Vagina (tissue), 2 donors: ENCODE measurements at regions of chr4 and their contacts with region 1.

Region 1: GRCh38 chr4:6783053-6783981 is 790 bp downstream of the KIAA0232 start:
- DNase-seq: peak in 1 of 2 donors; percentile 94
- H3K4me3 ChIP-seq: peak overlapping the region; percentile 96 to 100
- H3K27ac ChIP-seq: peak overlapping the region; percentile 100
- H3K4me1 ChIP-seq: peaks cover 52% of the 10 kb centered on the region
- H3K27me3 ChIP-seq: no peaks in the 10 kb centered on the region
- CTCF ChIP-seq: no peak
- POLR2A ChIP-seq: peak in 1 of 2 donors; percentile 76

Region 2: GRCh38 chr4:6768539-6768905 is 14.8 kb before region 1 on chr4:
- intact Hi-C with region 1: no loop called
- DNase-seq: no peak
- H3K4me3 ChIP-seq: no peak overlapping the region
- H3K27ac ChIP-seq: no peak overlapping the region
- H3K4me1 ChIP-seq: peaks cover 35% of the 10 kb centered on the region
- H3K27me3 ChIP-seq: no peaks in the 10 kb centered on the region
- CTCF ChIP-seq: no peak
- POLR2A ChIP-seq: no peak

Region 3: DNA sequence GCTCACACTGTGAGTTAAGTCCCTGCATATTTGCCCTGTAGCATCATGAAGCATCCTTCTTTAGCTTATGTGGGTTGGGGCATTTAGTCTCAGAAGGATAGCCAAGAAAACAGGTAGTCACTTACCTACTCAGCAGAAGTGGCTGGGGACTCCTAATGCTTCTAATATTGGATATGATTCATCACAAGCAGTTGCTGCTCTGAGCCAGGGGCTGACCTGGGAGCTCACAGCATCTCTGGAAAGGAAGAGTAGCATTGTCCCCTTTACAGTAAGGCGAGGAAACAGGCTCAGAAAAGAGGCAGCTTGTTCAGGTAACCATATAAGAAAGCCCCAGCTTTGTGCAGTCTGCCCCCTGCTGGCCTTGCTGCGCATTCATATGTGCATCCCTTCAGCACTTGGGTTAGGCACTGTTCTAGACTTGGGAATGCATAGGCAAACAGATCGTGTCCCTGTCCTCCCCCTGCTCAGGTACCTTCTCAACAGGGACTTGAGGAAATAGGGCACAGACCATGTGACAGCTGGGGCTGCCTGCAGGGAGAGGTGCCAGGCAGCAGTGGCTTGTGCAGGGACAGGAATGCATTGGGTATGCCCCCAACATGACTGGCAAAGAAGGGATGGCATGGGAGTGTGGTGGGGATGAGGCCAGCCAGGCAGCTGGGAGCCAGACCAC is 90.6 kb after region 1 on chr4:
- intact Hi-C with region 1: loop called (anchors 10 kb)
- DNase-seq: no peak
- H3K4me3 ChIP-seq: no peak overlapping the region
- H3K27ac ChIP-seq: no peak overlapping the region
- H3K4me1 ChIP-seq: peaks cover 10% of the 10 kb centered on the region
- H3K27me3 ChIP-seq: no peaks in the 10 kb centered on the region
- CTCF ChIP-seq: peak; percentile 62 to 78 (median 68)
- POLR2A ChIP-seq: no peak